AG04450 (cell line): ENCODE measurements at regions of chr14 and their contacts with region 1.

Region 1: GRCh38 chr14:64636208-64636979 is 67.8 kb upstream of the PLEKHG3 start:
- DNase-seq: no peak
- H3K4me3 ChIP-seq: no peak overlapping the region
- H3K27ac ChIP-seq: peak overlapping the region; percentile 11
- H3K27me3 ChIP-seq: no peaks in the 10 kb centered on the region
- CTCF ChIP-seq: peak; percentile 84

Region 2: DNA sequence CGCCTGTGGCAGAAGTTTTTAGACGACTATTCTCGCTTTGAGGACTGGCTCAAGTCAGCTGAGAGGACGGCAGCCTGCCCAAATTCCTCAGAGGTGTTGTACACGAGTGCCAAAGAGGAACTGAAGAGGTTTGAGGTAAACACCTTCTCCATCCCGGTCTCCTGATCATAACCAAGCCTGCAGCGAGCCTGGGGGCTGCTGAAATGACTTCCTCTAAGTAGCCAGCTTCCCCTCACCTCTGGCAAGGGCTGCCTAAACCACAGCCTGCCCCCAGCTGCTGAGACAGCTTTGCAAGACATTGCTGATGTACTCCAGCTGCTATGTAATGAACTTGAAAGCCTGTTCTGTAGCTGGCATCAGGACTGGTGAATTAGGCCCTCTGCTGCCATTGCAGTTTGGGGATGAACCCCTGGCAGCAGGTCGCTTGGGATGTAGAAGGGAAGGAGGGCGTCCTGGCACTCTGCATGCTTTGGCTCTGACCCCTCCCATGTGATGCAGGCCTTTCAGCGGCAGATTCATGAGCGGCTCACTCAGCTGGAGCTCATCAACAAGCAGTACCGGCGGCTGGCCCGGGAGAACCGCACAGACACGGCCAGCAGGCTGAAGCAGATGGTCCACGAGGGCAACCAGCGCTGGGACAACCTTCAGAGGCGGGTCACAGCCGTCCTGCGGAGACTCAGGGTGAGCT is 426.8 kb before region 1 on chr14:
- CTCF ChIA-PET with region 1: no interaction called
- POLR2A ChIA-PET with region 1: no interaction called
- DNase-seq: no peak
- H3K4me3 ChIP-seq: no peak overlapping the region
- H3K27ac ChIP-seq: no peak overlapping the region
- H3K27me3 ChIP-seq: no peaks in the 10 kb centered on the region
- CTCF ChIP-seq: no peak

Region 3: DNA sequence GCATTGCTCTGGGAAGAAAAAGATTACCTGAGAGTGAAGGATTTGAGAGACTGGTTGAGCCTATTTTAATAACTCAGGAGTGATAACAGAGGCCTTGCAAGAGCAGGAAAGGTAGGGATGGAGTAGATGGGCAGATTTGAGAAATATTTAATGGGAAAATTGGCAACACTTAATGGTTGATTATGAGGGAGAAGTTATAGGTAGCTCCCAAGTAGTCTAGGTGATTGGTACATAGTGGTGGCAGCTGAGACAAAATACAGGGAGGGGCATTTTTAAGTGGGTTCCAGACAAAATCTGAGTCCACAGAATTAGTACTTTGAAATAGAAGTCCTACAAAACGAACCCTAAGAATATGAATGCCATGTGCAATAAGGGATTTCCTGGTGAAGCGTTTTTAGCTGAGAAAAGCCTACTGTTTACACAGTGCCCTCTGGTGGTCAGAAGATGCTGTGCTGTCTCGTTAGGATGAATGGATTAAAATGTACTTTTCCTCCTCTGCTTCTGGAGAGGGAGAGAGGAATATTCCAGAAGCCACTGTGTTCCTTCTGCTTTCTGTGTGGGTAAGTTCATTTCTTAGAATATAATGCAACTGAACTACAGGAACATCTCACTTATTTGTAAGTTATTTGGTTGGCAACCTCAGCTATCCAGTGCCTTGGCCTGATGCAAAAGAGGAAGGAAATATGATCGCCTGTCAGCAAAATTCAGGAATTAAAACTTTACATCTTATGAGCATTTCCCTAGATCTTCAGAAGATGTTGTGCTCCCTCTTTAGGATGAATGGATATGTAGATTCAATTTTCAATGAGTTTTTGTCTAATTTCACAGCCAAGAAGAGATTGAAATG is 125.3 kb before region 1 on chr14:
- CTCF ChIA-PET with region 1: interaction called, 14 read pairs
- POLR2A ChIA-PET with region 1: no interaction called
- DNase-seq: peak; percentile 34
- H3K4me3 ChIP-seq: no peak overlapping the region
- H3K27ac ChIP-seq: no peak overlapping the region
- H3K27me3 ChIP-seq: no peaks in the 10 kb centered on the region
- CTCF ChIP-seq: peak; percentile 88

Region 4: GRCh38 chr14:64612021-64612380 is 24.4 kb before region 1 on chr14:
- CTCF ChIA-PET with region 1: interaction called, 25 read pairs
- POLR2A ChIA-PET with region 1: no interaction called
- DNase-seq: peak; percentile 61
- H3K4me3 ChIP-seq: no peak overlapping the region
- H3K27ac ChIP-seq: peak overlapping the region; percentile 88
- H3K27me3 ChIP-seq: no peaks in the 10 kb centered on the region
- CTCF ChIP-seq: no peak

Region 5: GRCh38 chr14:64623554-64624165 is 12.7 kb before region 1 on chr14:
- CTCF ChIA-PET with region 1: interaction called, 28 read pairs
- POLR2A ChIA-PET with region 1: interaction called, 3 read pairs
- DNase-seq: no peak
- H3K4me3 ChIP-seq: no peak overlapping the region
- H3K27ac ChIP-seq: no peak overlapping the region
- H3K27me3 ChIP-seq: no peaks in the 10 kb centered on the region
- CTCF ChIP-seq: no peak

Region 6: GRCh38 chr14:64663174-64663573 is 26.8 kb after region 1 on chr14:
- CTCF ChIA-PET with region 1: interaction called, 11 read pairs
- POLR2A ChIA-PET with region 1: no interaction called
- DNase-seq: no peak
- H3K4me3 ChIP-seq: no peak overlapping the region
- H3K27ac ChIP-seq: no peak overlapping the region
- H3K27me3 ChIP-seq: no peaks in the 10 kb centered on the region
- CTCF ChIP-seq: no peak

Region 7: GRCh38 chr14:65604936-65605335 is 968.5 kb after region 1 on chr14:
- CTCF ChIA-PET with region 1: no interaction called
- POLR2A ChIA-PET with region 1: no interaction called
- DNase-seq: no peak
- H3K4me3 ChIP-seq: no peak overlapping the region
- H3K27ac ChIP-seq: no peak overlapping the region
- H3K27me3 ChIP-seq: no peaks in the 10 kb centered on the region
- CTCF ChIP-seq: peak; percentile 37